Common myeloid progenitor, CD34-positive (primary cell): ENCODE measurements at regions of chr2 and their contacts with region 1.

Region 1: GRCh38 chr2:64330281-64331113 is 123.5 kb upstream of the LGALSL start:
- DNase-seq: peak; percentile 87 to 93 (median 88)
- H3K4me3 ChIP-seq: peak overlapping the region in 2 of 7 experiments; percentile 17 to 48
- H3K27ac ChIP-seq: no peak overlapping the region
- H3K4me1 ChIP-seq: peaks cover 2 to 20% (median 9%) of the 10 kb centered on the region in 4 experiments
- H3K27me3 ChIP-seq: peaks cover 0 to 1% (median 0%) of the 10 kb centered on the region in 5 experiments

Region 2: DNA sequence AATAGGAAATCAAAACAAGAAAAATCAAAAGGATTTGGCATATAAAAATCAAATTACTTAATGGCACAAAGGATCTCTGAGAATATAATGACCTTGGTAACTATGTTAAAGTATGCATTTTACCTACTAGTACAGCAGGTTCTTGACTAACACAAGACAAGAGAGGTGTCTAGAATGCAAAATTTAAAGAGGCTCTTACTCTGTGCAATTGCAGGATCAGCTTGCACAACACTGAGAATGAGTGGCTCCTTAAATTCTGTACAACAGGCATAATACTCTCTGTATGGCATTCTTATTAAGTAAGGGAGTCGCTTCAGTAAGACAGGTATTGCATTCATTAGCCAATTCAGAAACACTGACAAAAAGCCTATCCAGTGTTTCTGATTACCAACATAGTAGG is 416.2 kb before region 1 on chr2:
- CTCF ChIA-PET with region 1: no interaction called
- POLR2A ChIA-PET with region 1: no interaction called
- DNase-seq: no peak
- H3K4me3 ChIP-seq: no peak overlapping the region
- H3K27ac ChIP-seq: no peak overlapping the region
- H3K4me1 ChIP-seq: no peaks in the 10 kb centered on the region
- H3K27me3 ChIP-seq: no peaks in the 10 kb centered on the region

Region 3: DNA sequence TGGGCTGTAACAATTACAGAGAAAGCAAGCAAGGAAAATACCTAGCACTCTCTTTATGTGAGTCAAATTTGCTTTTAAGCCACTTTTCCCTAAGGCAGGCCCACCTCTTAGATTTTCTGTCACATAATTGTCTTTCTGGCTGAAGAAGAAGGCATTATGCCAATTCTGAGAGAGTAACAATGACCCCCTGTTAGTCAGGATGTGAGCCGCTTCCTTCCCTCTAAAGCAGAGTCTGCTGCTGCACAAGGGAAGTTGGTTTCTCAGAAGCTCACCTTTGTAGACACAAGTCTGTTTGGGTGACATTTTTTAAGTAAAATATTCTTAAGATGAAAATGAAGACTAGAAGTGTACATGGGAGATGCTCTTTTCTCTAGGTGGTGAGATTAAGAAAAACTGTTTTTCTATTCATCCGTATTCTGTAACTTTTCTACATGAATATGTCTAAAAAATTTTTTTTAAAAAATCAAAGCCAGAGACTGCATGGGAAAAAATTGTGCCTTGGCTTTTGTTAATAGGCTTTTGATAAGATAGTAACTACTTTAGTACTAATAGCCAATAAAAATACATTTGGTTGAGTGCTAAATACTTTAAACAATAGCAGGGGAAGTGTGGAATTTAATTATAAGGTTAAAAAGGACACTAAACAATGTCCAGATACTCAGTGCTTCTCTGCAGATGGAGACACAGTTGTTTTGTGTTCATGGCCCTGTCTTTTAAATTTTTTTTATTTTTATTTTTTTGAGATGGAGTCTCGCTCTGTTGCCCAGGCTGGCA is 277.8 kb before region 1 on chr2:
- CTCF ChIA-PET with region 1: interaction called, 206 read pairs
- POLR2A ChIA-PET with region 1: interaction called, 10 read pairs
- DNase-seq: peak; percentile 19 to 67 (median 58)
- H3K4me3 ChIP-seq: no peak overlapping the region
- H3K27ac ChIP-seq: no peak overlapping the region
- H3K4me1 ChIP-seq: peaks cover 6 to 22% (median 15%) of the 10 kb centered on the region in 4 experiments
- H3K27me3 ChIP-seq: no peaks in the 10 kb centered on the region

Region 4: DNA sequence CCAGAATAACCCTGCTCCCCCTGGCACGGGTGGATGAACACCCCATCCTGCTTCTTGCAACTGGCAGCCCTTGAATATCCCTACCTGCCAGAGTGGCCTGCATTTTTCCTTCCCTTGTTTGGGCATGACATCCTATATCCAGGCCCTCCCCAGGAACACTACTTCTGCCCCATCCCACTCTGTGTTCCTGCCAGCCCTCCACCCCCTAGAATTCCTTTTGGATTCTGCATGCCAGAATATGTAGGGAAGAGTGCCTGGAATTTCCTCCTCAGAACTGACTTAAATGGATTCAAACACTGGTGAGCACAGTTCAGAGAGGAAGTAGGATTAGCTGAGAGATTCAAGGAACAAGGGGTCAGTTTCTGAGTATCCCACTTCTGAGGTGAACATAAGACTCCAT is 62.8 kb before region 1 on chr2:
- CTCF ChIA-PET with region 1: no interaction called
- POLR2A ChIA-PET with region 1: no interaction called
- DNase-seq: no peak
- H3K4me3 ChIP-seq: no peak overlapping the region
- H3K27ac ChIP-seq: no peak overlapping the region
- H3K4me1 ChIP-seq: peaks cover 0 to 9% (median 2%) of the 10 kb centered on the region in 4 experiments
- H3K27me3 ChIP-seq: no peaks in the 10 kb centered on the region

Region 5: DNA sequence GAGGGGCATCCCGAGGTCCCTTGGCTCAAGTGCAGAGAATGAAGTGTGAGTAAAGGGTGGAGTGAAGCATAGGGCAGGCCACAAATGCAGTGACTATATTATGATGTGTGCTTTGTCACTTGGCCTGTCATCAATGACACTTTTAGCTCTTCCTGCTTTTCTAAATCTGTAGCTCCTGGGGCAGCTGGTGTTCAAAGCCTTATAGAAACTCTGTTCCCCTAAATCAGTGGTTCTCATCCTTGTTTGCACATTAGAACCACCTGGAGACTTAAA is 12.1 kb before region 1 on chr2:
- CTCF ChIA-PET with region 1: interaction called, 43 read pairs
- POLR2A ChIA-PET with region 1: no interaction called
- DNase-seq: no peak
- H3K4me3 ChIP-seq: no peak overlapping the region
- H3K27ac ChIP-seq: no peak overlapping the region
- H3K4me1 ChIP-seq: no peaks in the 10 kb centered on the region
- H3K27me3 ChIP-seq: peaks cover 0 to 2% (median 0%) of the 10 kb centered on the region in 5 experiments

Region 6: GRCh38 chr2:64354857-64355680 is 24.6 kb after region 1 on chr2:
- CTCF ChIA-PET with region 1: interaction called, 10 read pairs
- POLR2A ChIA-PET with region 1: no interaction called
- DNase-seq: peak; percentile 80 to 92 (median 84)
- H3K4me3 ChIP-seq: no peak overlapping the region
- H3K27ac ChIP-seq: no peak overlapping the region
- H3K4me1 ChIP-seq: peaks cover 0 to 4% (median 1%) of the 10 kb centered on the region in 4 experiments
- H3K27me3 ChIP-seq: peaks cover 0 to 12% (median 0%) of the 10 kb centered on the region in 5 experiments

Region 7: GRCh38 chr2:64488050-64488974 is 157.8 kb after region 1 on chr2:
- CTCF ChIA-PET with region 1: interaction called, 201 read pairs
- POLR2A ChIA-PET with region 1: interaction called, 3 read pairs
- DNase-seq: peak; percentile 68 to 83 (median 74)
- H3K4me3 ChIP-seq: no peak overlapping the region
- H3K27ac ChIP-seq: no peak overlapping the region
- H3K4me1 ChIP-seq: peaks cover 3 to 8% (median 5%) of the 10 kb centered on the region in 4 experiments
- H3K27me3 ChIP-seq: peaks cover 0 to 27% (median 10%) of the 10 kb centered on the region in 5 experiments

Region 8: GRCh38 chr2:64554117-64554516 is 223.6 kb after region 1 on chr2:
- CTCF ChIA-PET with region 1: interaction called, 177 read pairs
- POLR2A ChIA-PET with region 1: no interaction called
- DNase-seq: no peak
- H3K4me3 ChIP-seq: no peak overlapping the region
- H3K27ac ChIP-seq: no peak overlapping the region
- H3K4me1 ChIP-seq: no peaks in the 10 kb centered on the region
- H3K27me3 ChIP-seq: no peaks in the 10 kb centered on the region

Region 9: DNA sequence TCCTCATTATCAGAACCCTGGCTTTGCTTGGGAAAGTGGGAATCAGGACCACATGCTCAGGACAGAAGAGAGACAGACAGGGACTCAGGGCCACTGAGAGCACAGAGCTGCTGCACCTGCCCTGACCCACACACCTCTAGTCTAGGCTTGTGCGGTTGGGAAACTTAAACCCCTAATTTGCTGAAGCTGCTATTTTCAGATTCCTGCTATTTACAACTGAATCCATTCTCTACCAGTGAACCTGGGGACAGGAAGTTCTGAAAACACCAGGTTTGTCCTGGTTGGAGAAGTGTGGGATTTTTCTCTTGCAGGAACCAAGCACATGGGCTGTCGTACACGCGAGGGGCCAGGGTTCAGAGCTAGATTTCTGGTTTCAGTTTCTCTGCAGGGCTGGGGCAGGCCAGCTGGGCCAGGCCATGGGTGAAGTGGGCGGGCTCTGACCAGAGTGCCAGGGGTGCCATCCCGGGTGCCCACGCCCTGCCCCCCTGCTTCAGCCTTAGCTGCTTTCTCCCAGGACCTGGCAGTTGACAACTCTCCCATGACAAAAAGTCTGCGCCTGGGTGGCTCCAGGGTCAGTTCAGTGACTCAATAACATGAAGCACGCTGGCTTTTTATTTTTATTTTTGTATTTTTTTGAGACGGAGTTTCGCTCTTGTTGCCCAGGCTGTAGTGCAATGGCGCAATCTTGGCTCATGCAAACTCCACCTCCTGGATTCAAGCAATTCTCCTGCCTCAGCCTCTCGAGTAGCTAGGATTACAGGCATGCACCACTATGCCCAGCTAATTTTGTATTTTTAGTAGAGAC is 607.4 kb after region 1 on chr2:
- CTCF ChIA-PET with region 1: no interaction called
- POLR2A ChIA-PET with region 1: no interaction called
- DNase-seq: no peak
- H3K4me3 ChIP-seq: no peak overlapping the region
- H3K27ac ChIP-seq: no peak overlapping the region
- H3K4me1 ChIP-seq: peaks cover 9 to 39% (median 37%) of the 10 kb centered on the region in 4 experiments
- H3K27me3 ChIP-seq: no peaks in the 10 kb centered on the region